ENCODE measurements at regions of chr5 and their contacts with region 1.

Region 1: DNA sequence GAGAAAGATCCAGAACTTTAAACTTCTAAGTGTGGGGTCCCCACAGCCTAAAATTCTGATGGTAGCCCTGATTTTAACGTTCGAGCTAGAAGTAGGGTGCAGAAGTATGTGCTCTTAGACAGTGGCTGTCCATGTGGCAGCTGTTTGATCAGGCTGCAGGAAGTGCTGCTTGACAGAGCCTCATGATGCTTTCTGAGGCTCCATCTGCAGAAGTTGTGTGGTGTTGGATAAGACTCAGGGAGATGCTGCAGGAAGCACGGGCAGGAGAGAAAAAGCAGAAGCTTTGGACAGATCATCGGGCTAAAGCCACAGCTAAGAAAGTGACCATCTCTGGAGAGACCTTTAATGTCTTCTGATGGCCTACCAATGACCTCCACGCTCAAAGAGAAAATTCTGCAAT is 8.1 kb downstream of the MTMR12 start:
- DNase-seq: peak in 2 of 3 donors; percentile 26 to 27
- H3K4me3 ChIP-seq: no peak overlapping the region
- H3K4me3 Mint-ChIP-seq: no peak overlapping the region
- H3K27ac ChIP-seq: no peak overlapping the region
- H3K27ac Mint-ChIP-seq: peak overlapping the region in 4 of 7 donors; percentile 2 to 38 (median 6)
- H3K4me1 ChIP-seq: peaks cover 16 to 24% of the 10 kb centered on the region in 2 donors
- H3K4me1 Mint-ChIP-seq: peaks cover 44% of the 10 kb centered on the region
- H3K27me3 ChIP-seq: no peaks in the 10 kb centered on the region
- H3K27me3 Mint-ChIP-seq: peaks cover 0 to 3% (median 1%) of the 10 kb centered on the region in 3 donors
- CTCF ChIP-seq: no peak

Region 2: GRCh38 chr5:32163785-32164184 is 140.8 kb before region 1 on chr5:
- intact Hi-C with region 1: loop called in 1 of 2 experiments (anchors 10 kb)
- DNase-seq: no peak
- H3K4me3 ChIP-seq: peak overlapping the region in 1 of 3 experiments; percentile 36
- H3K4me3 Mint-ChIP-seq: no peak overlapping the region
- H3K27ac ChIP-seq: peak overlapping the region in 1 of 2 donors; percentile 54
- H3K27ac Mint-ChIP-seq: peak overlapping the region in 4 of 7 donors; percentile 18 to 79 (median 70)
- H3K4me1 ChIP-seq: peaks cover 32 to 39% of the 10 kb centered on the region in 2 donors
- H3K4me1 Mint-ChIP-seq: peaks cover 41% of the 10 kb centered on the region
- H3K27me3 ChIP-seq: no peaks in the 10 kb centered on the region
- H3K27me3 Mint-ChIP-seq: peaks cover 0 to 2% (median 0%) of the 10 kb centered on the region in 3 donors
- CTCF ChIP-seq: no peak